A549 (cell line): ENCODE measurements at regions of chr9 and their contacts with region 1.

Region 1: DNA sequence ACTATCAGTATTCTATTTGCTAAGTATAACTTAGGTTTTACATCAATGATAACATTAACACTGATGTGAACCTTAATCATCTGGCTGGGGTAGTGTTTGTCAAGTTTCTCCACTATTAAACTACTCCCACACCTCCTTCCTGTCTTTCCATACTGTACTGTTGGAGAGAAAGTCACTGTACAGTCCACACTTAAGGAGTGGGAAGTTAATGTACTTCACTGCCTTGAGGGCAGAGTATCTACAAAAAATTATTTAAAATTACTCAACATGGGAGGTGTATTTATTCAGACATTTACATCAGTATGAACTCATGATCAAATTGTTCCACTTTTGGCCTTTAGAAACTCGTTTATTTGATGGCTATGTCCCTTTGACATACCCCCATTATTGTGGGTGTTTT is 11.9 kb downstream of the UHRF2 start:
- DNase-seq: no peak
- ATAC-seq: no peak
- H3K4me3 ChIP-seq: no peak overlapping the region
- H3K27ac ChIP-seq: no peak overlapping the region
- H3K4me1 ChIP-seq: peaks cover 15% of the 10 kb centered on the region; the same call in 1 of the 3 replicates
- CTCF ChIP-seq: no peak
- EP300 ChIP-seq: no peak
- POLR2A ChIP-seq: no peak
- RAD21 ChIP-seq: no peak

Region 2: DNA sequence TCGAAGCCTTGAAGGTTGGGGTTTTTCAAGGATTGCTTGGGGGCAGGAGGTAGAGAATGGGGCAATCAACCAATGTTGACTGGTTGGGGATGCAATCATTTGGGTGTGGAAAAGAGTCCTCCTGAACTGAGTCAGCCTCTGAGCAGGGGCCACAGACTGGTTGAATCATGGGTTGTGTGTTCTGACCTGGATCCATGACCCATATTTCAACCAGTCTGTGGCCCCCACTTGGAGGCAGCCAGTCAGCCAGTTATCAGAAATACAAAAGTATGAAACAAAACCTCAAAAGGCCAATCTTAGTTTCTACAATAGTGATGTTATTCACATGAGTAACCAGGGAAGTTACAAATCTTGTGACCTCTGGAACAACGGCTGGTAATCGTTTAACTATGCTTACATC is 328.1 kb before region 1 on chr9:
- CTCF ChIA-PET with region 1: no interaction called
- POLR2A ChIA-PET with region 1: no interaction called
- DNase-seq: peak in 1 of 2 experiments; percentile 26
- ATAC-seq: peak; percentile 57 to 71; a peak in 5 of 6 replicates
- H3K4me3 ChIP-seq: no peak overlapping the region
- H3K27ac ChIP-seq: no peak overlapping the region
- H3K4me1 ChIP-seq: no peaks in the 10 kb centered on the region; the same call in 2 of the 3 replicates
- CTCF ChIP-seq: no peak
- EP300 ChIP-seq: no peak
- POLR2A ChIP-seq: no peak
- RAD21 ChIP-seq: no peak

Region 3: GRCh38 chr9:6384732-6385131 is 40.2 kb before region 1 on chr9:
- CTCF ChIA-PET with region 1: no interaction called
- POLR2A ChIA-PET with region 1: no interaction called
- DNase-seq: no peak
- ATAC-seq: no peak
- H3K4me3 ChIP-seq: no peak overlapping the region
- H3K27ac ChIP-seq: no peak overlapping the region
- H3K4me1 ChIP-seq: no peaks in the 10 kb centered on the region
- CTCF ChIP-seq: no peak
- EP300 ChIP-seq: no peak
- POLR2A ChIP-seq: no peak
- RAD21 ChIP-seq: no peak

Region 4: DNA sequence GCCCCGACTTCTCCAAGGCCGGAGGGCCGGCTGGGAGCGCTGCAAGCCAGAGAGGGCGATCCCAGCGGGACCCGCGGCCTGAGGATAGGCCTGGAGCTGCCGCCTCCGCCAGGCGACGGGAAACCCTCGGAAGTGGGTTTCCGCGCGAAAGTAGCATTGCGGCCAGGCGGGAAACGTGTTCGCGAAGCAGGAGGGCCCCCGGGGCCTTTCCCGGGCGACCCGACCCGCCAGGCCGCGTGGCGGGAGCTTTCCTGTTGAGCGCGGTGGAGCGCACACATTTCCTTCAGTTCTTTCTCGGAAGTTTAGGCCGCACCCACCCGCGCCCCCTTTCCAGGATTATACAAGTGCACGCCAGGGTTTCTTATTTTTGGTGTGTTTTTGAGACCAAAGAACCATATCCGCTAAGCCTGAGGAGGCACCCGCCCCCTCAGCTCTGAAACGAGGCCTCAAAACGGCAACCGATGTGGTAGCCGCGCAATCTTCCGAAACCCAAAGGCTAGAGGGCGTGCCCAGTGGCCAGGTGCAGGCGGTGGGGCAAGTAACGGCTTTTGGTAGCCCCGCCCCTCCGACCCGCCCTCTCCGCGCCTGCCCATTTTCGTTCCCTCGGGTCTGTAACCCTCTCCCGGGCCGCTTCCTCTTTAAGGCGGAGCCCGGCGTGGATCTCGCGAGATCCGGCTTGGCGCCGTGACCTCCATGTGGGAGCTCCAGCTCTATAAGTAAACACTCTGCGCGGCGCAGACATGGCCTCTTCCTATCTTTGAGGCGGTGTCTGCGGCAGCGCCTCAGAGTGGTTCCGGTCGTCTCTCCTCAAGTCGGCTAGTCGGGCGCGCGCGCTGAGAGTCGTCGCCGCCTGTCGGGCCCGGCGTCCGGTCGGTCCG is 12.2 kb before region 1 on chr9 and contains the start of gene UHRF2:
- CTCF ChIA-PET with region 1: interaction called, 4 read pairs
- POLR2A ChIA-PET with region 1: interaction called, 11 read pairs
- DNase-seq: peak; percentile 94 to 98
- ATAC-seq: peak; percentile 96 to 98
- H3K4me3 ChIP-seq: peak within 1 kb of the TSS; percentile 94
- H3K27ac ChIP-seq: peak within 1 kb of the TSS; percentile 91 to 96
- H3K4me1 ChIP-seq: peaks cover 17% of the 10 kb centered on the region
- CTCF ChIP-seq: no peak
- EP300 ChIP-seq: no peak
- POLR2A ChIP-seq: peak; percentile 72
- RAD21 ChIP-seq: no peak
- polyA plus RNA-seq, gene UHRF2: 60.6 and 74.3 TPM in 2 replicates